HepG2 (cell line): ENCODE measurements at regions of chr9 and their contacts with region 1.

Region 1: DNA sequence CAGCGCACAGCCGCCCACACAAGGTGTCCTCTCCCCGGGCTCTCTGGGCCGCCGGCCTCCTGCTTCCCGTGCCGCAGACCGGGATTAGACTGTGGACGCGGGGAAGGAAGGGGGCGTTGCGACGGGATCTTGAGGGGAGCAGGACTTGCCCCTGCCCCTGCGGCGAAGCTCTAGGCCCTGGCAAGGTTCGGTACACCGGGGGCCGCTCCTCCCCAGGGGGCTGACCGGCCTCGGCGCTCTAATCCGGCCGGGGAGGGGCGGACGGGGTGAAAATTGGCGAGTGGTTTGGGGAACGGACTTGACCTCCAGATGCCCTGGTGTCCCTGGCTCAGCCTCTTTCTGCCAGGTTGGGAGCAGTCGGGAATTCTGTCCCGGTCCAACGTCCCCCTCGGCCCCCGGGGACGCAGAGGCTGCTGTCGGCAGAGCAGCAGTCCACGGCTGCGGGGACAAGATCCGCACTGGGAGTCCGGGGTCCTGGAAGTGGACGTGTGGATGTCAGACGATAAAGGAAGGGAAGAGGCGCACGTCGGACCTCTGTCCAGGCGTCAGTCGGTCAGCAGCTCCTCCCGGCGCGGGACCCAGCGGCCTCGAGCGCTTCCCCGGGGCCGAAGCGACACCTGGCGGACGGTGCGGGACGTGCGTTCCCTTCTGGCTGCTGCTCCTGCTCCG is 1.9 kb upstream of the CNTFR start:
- DNase-seq: peak; percentile 47
- ATAC-seq: peak; percentile 93
- H3K4me3 ChIP-seq: peak overlapping the region in 1 of 3 experiments; percentile 7; a peak in 1 of 6 replicates
- H3K27ac ChIP-seq: no peak overlapping the region
- H3K4me1 ChIP-seq: peaks cover 28% of the 10 kb centered on the region; the same call in 1 of the 2 replicates
- H3K27me3 ChIP-seq: peaks cover 19 to 78% of the 10 kb centered on the region in 2 experiments
- CTCF ChIP-seq: peak; percentile 98
- EP300 ChIP-seq: no peak
- POLR2A ChIP-seq: no peak
- RAD21 ChIP-seq: peak; percentile 96

Region 2: GRCh38 chr9:34403554-34404380 is 187.6 kb before region 1 on chr9:
- CTCF ChIA-PET with region 1: interaction called, 10 read pairs
- POLR2A ChIA-PET with region 1: interaction called, 3 read pairs
- in situ Hi-C with region 1: no loop called
- intact Hi-C with region 1: no loop called
- DNase-seq: peak; percentile 50
- ATAC-seq: peak; percentile 81
- H3K4me3 ChIP-seq: no peak overlapping the region
- H3K27ac ChIP-seq: no peak overlapping the region
- H3K4me1 ChIP-seq: no peaks in the 10 kb centered on the region
- H3K27me3 ChIP-seq: no peaks in the 10 kb centered on the region
- CTCF ChIP-seq: peak; percentile 87
- EP300 ChIP-seq: no peak
- POLR2A ChIP-seq: no peak
- RAD21 ChIP-seq: peak; percentile 47

Region 3: GRCh38 chr9:34437006-34437925 is 154.1 kb before region 1 on chr9:
- CTCF ChIA-PET with region 1: interaction called, 10 read pairs
- POLR2A ChIA-PET with region 1: no interaction called
- in situ Hi-C with region 1: no loop called
- intact Hi-C with region 1: loop called (anchors 2 kb)
- DNase-seq: peak; percentile 68
- ATAC-seq: peak; percentile 88
- H3K4me3 ChIP-seq: no peak overlapping the region
- H3K27ac ChIP-seq: no peak overlapping the region
- H3K4me1 ChIP-seq: no peaks in the 10 kb centered on the region
- H3K27me3 ChIP-seq: no peaks in the 10 kb centered on the region
- CTCF ChIP-seq: peak; percentile 86
- EP300 ChIP-seq: no peak
- POLR2A ChIP-seq: no peak
- RAD21 ChIP-seq: peak; percentile 67; the same call in 1 of the 2 replicates

Region 4: GRCh38 chr9:34500623-34501267 is 90.6 kb before region 1 on chr9:
- CTCF ChIA-PET with region 1: no interaction called
- POLR2A ChIA-PET with region 1: no interaction called
- in situ Hi-C with region 1: no loop called
- intact Hi-C with region 1: loop called (anchors 5 kb)
- DNase-seq: peak; percentile 18
- ATAC-seq: peak; percentile 60
- H3K4me3 ChIP-seq: no peak overlapping the region
- H3K27ac ChIP-seq: no peak overlapping the region
- H3K4me1 ChIP-seq: peaks cover 23% of the 10 kb centered on the region
- H3K27me3 ChIP-seq: peaks cover 0 to 17% of the 10 kb centered on the region in 2 experiments; a peak in 2 of 5 replicates
- CTCF ChIP-seq: peak; percentile 82
- EP300 ChIP-seq: no peak
- POLR2A ChIP-seq: no peak
- RAD21 ChIP-seq: peak; percentile 60

Region 5: GRCh38 chr9:34546834-34547827 is 44.3 kb before region 1 on chr9:
- CTCF ChIA-PET with region 1: interaction called, 42 read pairs
- POLR2A ChIA-PET with region 1: no interaction called
- in situ Hi-C with region 1: loop called (anchors 5 kb)
- intact Hi-C with region 1: loop called (anchors 1 kb)
- DNase-seq: peak; percentile 58
- ATAC-seq: peak; percentile 76
- H3K4me3 ChIP-seq: no peak overlapping the region
- H3K27ac ChIP-seq: no peak overlapping the region
- H3K4me1 ChIP-seq: peaks cover 18% of the 10 kb centered on the region
- H3K27me3 ChIP-seq: peaks cover 0 to 17% of the 10 kb centered on the region in 2 experiments; a peak in 2 of 5 replicates
- CTCF ChIP-seq: peak; percentile 78
- EP300 ChIP-seq: no peak
- POLR2A ChIP-seq: no peak
- RAD21 ChIP-seq: peak; percentile 73

Region 6: DNA sequence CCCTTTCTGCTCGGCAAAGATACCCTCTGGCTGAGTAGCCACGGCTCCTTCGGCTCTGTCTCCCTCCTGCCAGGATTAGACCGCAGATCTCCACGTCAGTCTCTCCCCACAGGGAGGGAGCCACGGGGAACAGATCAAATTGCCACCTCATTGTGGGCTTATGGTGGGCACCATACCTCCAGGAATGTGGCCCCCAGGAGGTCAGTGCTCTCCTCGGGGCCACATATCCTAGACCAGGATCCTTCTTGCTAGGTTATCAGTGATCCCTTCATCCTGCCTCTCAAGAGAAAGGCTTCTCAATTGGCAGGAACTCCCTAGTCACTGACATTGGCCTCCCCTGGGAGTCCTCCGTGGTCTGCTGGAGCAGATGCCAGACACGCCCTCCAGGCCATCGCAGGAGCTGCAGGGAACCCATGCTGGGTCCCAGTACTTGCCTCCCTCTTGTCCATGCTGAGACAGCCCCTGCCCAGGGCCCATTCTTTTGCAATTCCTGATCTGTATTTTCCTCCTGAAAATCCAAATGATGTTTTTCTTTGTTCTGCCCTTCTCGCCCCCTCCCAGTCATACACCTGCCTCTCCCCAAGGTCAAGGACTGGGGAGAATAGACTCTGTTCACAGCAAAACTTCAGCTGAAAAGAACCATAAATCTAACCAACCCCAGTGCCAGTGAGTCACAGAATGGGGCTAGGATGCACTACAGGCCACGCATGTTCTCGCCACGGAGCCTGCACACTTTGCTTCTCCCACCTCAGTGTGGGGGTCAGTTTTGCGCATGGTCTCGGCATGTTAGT is 37.0 kb before region 1 on chr9:
- CTCF ChIA-PET with region 1: interaction called, 42 read pairs
- POLR2A ChIA-PET with region 1: no interaction called
- in situ Hi-C with region 1: loop called (anchors 5 kb)
- intact Hi-C with region 1: no loop called
- DNase-seq: no peak
- ATAC-seq: peak; percentile 31; the same call in 1 of the 3 replicates
- H3K4me3 ChIP-seq: no peak overlapping the region
- H3K27ac ChIP-seq: no peak overlapping the region
- H3K4me1 ChIP-seq: peaks cover 14% of the 10 kb centered on the region
- H3K27me3 ChIP-seq: peaks cover 8 to 60% of the 10 kb centered on the region in 2 experiments; a peak in 4 of 5 replicates
- CTCF ChIP-seq: no peak
- EP300 ChIP-seq: no peak
- POLR2A ChIP-seq: no peak
- RAD21 ChIP-seq: no peak

Region 7: DNA sequence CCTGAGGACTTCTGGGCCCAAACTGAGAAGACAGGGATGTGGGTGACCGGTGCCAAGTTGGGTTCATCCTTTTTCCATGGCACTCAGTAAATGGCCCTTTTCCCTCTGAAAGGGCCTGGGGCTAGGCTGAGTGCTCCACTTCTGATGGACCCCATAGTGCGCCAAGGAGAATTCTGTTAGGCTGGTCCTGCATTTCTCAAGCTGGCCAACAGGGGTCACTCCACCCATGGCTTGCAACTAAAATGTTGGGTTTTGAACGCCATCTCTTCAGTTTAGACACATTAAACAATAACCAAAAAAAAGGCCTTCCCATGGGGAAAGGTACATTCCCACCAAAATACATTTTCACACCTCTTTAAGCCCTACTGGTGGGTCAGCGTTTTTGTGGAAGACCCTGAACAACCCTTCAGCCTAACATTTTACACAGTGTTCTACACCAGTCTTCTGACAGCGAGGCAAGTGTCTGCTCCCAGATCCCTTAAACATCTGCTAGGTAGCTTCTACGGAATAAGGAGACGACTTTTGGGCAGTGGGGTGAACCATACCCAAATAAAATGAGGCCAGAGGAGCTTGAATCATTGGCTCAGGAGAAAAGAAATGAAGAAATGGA is 29.1 kb before region 1 on chr9:
- CTCF ChIA-PET with region 1: interaction called, 10 read pairs
- POLR2A ChIA-PET with region 1: no interaction called
- in situ Hi-C with region 1: no loop called
- intact Hi-C with region 1: no loop called
- DNase-seq: no peak
- ATAC-seq: no peak
- H3K4me3 ChIP-seq: no peak overlapping the region
- H3K27ac ChIP-seq: no peak overlapping the region
- H3K4me1 ChIP-seq: peaks cover 20% of the 10 kb centered on the region
- H3K27me3 ChIP-seq: peaks cover 2 to 55% of the 10 kb centered on the region in 2 experiments; a peak in 3 of 5 replicates
- CTCF ChIP-seq: peak; percentile 59
- EP300 ChIP-seq: no peak
- POLR2A ChIP-seq: no peak
- RAD21 ChIP-seq: no peak

Region 8: DNA sequence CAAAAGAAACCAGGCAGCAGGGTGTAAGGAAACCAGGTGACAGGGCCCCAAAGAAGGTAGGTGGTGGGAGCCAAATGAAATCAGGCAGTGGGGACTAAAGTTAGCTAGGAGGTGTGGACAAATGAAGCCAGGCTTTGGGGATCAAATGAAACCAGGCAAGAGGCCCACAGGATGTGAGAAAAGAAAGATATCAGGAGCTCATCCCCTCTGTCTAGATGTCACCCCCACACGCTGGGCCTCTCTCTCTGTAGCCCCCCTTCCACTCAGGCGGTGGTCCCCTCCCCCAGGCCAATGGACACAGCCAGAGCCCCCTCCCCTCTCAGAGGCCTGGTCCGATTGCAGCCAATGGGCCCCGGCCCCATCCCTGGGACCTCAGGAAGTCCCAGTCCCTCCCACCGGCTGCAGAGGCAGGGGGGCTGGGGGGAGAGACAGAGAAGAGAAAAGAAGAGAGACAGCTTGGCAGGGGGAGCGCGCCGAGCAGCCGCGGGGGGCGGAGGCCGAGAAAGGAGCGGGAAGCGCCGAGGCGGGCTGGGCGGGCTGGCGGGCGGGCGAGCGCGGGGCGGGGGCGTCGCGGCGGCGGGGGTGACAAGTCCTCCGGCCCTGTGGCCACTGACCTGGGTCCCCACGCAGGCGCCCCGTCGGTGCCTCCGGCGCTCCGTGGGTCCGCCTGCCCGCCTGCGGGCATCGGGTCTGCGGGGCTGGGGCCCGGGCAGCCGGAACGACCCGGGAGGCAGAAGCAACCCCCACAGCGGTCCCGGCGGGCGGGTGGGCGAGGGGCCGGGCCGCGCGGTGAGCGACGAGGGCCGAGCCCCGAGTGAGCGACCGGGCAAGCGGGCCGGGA is 13.8 kb before region 1 on chr9:
- CTCF ChIA-PET with region 1: no interaction called
- POLR2A ChIA-PET with region 1: no interaction called
- in situ Hi-C with region 1: no loop called
- intact Hi-C with region 1: no loop called
- DNase-seq: no peak
- ATAC-seq: no peak
- H3K4me3 ChIP-seq: no peak overlapping the region
- H3K27ac ChIP-seq: no peak overlapping the region
- H3K4me1 ChIP-seq: no peaks in the 10 kb centered on the region
- H3K27me3 ChIP-seq: peaks cover 13 to 73% of the 10 kb centered on the region in 2 experiments
- CTCF ChIP-seq: no peak
- EP300 ChIP-seq: no peak
- POLR2A ChIP-seq: no peak
- RAD21 ChIP-seq: no peak

Region 9: DNA sequence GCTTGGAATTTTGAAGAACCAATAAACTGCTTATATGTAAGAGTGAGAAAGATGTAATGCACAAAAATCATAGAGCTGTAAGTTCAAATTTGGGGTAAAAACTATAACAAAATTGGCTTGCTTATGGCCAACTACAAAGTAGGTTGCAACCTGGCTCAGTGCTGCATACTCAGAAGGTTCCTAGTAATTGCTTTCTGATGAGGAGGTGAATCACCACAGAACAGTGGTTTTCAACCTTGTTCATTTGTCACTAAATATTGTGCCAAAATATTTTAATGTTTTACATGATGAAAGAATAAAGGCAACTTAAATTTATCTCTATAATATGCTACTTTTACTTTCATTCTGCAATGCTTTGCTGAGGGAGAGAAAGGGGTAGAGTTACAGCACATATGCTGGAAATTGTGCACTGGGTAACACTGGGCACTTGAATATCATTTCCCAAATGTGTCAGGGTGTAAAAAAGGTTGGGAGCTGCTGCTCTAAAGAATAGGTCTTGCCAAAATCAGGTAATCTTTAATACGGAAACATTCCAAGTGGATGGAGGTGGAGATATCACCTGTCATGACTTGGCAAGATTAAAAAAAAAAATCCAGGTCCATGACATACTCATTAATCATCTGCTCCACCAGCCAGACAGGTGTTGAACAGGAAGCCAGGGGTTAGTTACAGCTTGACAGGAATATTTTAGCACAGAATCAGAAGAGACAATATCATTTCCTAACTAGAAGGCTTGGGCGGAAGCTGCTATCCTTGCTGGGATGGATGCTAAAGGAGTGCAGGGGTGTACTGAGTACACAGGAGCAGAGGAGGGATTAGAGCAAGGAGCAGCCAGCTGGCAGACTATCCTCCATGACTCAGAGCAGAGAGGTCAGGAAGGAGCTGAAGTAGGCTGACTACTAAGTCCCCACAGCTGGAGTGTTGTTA is 153.2 kb after region 1 on chr9:
- CTCF ChIA-PET with region 1: no interaction called
- POLR2A ChIA-PET with region 1: no interaction called
- in situ Hi-C with region 1: no loop called
- intact Hi-C with region 1: no loop called
- DNase-seq: no peak
- ATAC-seq: no peak
- H3K4me3 ChIP-seq: no peak overlapping the region
- H3K27ac ChIP-seq: no peak overlapping the region
- H3K4me1 ChIP-seq: no peaks in the 10 kb centered on the region; the same call in 1 of the 2 replicates
- H3K27me3 ChIP-seq: no peaks in the 10 kb centered on the region
- CTCF ChIP-seq: no peak
- EP300 ChIP-seq: no peak
- POLR2A ChIP-seq: no peak
- RAD21 ChIP-seq: no peak